ENCODE measurements at regions of chr14 and their contacts with region 1.

Region 1: GRCh38 chr14:103518422-103519042 is 4.1 kb downstream of the CKB start:
- DNase-seq: no peak
- H3K4me3 ChIP-seq: no peak overlapping the region
- H3K27ac ChIP-seq: no peak overlapping the region
- H3K27me3 ChIP-seq: peaks cover 15% of the 10 kb centered on the region
- CTCF ChIP-seq: peak; percentile 93

Region 2: DNA sequence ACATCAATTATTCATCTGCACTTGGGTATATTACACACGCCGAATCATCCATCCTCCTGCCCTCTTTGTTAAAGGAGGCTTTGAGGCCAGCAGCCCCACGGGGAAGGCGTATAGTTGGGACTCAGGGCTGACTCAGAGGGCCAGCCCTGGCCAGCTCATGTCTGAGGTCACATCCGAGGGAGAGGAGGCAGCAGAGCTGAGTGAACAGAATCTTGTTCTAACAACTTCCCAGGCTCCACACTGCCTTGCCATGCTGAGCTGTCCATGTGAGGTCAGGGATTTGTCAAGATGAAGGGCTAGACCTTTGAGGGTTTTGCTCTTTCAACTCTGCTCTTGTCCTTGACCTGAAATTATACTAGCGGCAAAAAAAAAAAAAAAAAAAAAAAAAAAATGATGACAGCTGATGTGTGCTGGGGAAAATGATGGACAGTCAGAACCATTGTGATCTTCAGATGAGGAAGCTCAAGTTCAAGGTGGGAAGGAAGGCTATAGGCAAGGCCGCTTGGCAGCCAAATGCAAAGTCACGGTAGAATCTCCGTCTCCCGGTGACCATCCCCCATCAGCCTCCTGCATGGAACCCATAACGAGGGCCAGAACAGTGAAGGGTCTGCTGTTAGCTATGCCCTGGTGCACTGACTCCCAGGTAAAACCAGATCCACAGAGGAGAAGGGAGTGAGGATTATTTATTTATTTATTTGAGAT is 145.8 kb before region 1 on chr14:
- CTCF ChIA-PET with region 1: no interaction called
- POLR2A ChIA-PET with region 1: no interaction called
- DNase-seq: peak; percentile 76
- H3K4me3 ChIP-seq: no peak overlapping the region
- H3K27ac ChIP-seq: peak overlapping the region; percentile 73
- H3K27me3 ChIP-seq: no peaks in the 10 kb centered on the region
- CTCF ChIP-seq: no peak

Region 3: DNA sequence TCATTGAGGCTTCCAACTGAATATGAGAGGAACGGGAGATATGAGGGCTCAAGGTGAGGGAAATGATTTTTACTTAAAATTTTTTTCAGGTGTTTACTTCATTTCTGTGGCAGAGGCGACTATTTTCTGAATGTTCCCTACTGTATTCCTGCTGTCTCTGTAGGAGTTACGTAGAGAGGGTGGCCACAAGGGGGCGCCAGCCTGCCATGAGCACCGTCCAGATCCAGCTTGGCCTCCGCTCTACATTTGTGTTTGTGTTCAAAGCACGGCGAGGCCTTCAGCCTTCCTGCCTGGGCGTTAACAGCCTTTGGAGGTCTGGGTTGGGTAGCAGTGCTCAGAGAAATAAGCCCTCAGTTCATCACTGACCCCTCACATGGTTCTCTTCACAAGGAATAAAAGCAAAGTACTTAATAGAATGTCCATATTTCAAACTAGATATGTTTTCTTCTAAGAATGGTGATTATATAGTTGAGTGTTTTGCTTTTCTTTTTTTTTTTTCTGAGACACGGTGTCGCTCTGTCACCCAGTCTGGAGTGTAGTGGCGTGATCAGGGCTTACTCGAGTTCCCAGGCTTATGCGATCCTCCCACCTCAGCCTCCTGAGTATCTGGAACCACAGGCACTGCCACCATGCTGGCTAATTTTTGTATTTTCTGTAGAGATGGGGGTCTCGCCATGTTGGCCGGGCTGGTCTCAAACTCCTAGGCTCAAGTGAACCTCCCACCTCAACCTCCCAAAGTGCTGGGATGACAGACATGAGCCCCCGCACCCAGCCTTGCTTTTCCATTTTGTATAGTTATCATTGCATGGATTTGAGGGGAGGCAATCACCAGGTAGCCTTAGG is 18.2 kb before region 1 on chr14:
- CTCF ChIA-PET with region 1: interaction called, 11 read pairs
- POLR2A ChIA-PET with region 1: no interaction called
- DNase-seq: peak; percentile 66
- H3K4me3 ChIP-seq: no peak overlapping the region
- H3K27ac ChIP-seq: no peak overlapping the region
- H3K27me3 ChIP-seq: no peaks in the 10 kb centered on the region
- CTCF ChIP-seq: peak; percentile 98

Region 4: DNA sequence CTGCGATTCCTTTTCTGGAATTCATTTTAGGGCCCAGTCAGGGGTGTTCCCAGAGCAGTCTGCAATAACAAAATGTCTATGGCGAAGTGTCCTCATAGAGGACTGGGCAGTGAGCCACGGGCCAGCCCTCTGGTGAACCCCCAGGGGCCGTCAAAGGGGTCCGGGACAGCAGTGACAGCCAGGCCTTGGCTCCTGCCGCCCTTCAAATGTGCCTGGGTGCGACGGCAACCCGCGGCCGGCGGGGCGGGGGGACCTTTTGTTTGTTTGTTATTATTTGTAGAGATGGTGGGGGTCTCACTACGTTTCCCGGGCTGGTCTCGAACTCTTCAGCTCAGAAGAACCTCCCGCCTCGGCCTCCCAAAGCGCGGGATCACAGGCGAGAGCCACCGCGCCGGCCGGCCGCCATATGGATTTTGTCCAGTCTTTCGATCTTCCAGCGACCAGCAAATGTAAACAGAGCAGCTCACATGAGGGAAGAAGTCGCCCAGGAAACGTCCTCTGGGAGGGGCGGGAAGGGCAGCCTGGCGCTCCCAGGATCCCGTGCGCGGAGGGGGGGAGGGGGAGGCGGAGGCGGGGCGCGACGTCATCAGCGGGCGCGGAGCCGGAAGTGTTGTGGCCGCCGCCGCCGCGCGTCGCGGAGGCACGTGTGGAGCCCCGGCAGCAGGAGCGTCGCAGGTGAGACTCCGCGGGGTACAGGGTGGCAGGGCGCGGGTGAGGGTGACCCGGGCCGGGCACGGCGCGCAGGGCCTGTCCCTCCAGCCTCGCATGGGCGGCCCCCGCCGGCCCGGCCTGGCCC is 10.3 kb after region 1 on chr14 and contains the start of gene TRMT61A:
- CTCF ChIA-PET with region 1: interaction called, 29 read pairs
- POLR2A ChIA-PET with region 1: interaction called, 4 read pairs
- DNase-seq: peak; percentile 86
- H3K4me3 ChIP-seq: peak within 1 kb of the TSS; percentile 95
- H3K27ac ChIP-seq: peak within 1 kb of the TSS; percentile 82
- H3K27me3 ChIP-seq: peaks cover 2% of the 10 kb centered on the region
- CTCF ChIP-seq: no peak
- polyA plus RNA-seq, gene TRMT61A: 4.4 and 6.1 TPM in 2 replicates

Region 5: GRCh38 chr14:103546652-103547454 is 28.3 kb after region 1 on chr14:
- CTCF ChIA-PET with region 1: interaction called, 24 read pairs
- POLR2A ChIA-PET with region 1: interaction called, 5 read pairs
- DNase-seq: no peak
- H3K4me3 ChIP-seq: no peak overlapping the region
- H3K27ac ChIP-seq: no peak overlapping the region
- H3K27me3 ChIP-seq: no peaks in the 10 kb centered on the region
- CTCF ChIP-seq: peak; percentile 85

Region 6: DNA sequence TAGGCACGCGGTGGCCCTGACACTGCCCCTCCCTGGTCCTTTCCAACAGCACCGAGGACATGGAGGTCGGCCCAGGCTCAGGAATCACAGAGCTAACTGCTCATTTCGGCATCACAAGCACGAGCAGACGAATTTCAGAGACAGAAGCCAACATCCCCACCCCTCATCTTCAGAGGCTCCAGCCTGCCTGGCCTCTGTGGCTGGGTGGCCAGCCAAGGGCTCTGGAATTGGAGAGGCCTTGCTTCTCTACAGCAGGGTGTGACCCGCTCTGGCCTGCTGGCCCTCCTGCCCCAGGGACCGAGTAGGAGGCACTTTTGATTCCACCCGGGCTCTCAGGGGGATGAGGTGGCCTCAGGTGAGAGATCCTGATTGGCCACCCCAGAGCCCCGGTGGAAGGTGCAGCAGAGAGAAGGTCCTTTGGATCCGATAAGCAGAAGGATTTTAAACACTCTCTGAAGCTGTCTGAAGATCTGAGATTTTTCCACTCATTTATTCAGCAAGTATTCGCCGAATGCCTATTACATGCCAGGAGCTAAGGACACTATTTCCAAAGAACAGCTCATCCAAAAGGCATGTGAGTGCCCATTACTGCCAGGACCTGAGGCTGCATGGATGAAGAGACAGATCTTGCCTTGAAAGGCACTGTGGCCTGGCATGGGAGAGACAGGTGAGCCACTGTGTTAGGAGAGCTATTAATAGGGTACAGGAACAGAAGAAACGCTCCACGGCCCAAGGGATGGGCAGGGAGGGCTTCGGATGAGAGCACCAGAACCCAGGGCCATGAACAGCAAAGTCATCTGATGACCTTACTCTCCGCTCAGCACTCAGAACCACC is 33.7 kb after region 1 on chr14:
- CTCF ChIA-PET with region 1: interaction called, 24 read pairs
- POLR2A ChIA-PET with region 1: interaction called, 5 read pairs
- DNase-seq: no peak
- H3K4me3 ChIP-seq: no peak overlapping the region
- H3K27ac ChIP-seq: no peak overlapping the region
- H3K27me3 ChIP-seq: no peaks in the 10 kb centered on the region
- CTCF ChIP-seq: no peak

Region 7: DNA sequence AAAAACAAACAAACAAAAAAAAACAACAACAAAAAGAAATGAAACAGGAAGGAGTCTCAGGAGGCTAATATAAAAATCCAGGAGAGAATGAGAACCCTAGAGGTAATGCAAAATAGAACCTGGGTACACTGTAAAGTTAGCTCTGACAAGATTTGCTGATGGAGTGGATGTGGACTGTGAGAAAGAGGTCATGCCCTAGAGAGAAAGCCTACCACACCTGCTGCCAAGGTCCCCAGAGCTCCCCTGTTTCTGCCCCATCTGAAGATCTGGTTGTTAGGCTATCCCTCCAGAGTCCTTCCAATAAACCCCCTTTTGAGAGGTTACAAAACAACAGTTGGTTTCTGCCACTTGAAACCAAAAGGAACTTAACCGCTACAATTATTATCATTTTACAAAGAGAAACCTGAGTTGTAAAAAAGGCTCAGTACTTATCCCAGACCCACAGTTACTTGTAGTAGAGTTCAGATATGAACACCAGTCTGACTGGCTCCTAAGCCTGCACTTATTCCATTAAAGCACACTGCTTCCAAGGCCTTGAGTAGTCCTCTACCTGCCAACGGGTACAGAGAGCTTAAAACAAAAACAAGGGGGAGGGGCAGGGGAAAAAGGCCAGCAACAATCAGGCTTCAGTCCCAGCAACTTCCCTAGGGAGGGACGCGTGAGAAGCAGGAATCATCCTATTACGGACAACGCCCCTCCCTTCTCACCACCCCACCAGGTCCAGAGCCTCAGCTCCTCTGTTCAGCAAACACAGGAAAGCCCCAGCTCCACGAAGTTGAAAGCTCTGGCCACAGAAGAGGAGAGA is 301.2 kb after region 1 on chr14:
- CTCF ChIA-PET with region 1: no interaction called
- POLR2A ChIA-PET with region 1: no interaction called
- DNase-seq: no peak
- H3K4me3 ChIP-seq: no peak overlapping the region
- H3K27ac ChIP-seq: no peak overlapping the region
- H3K27me3 ChIP-seq: peaks cover 13% of the 10 kb centered on the region
- CTCF ChIP-seq: no peak